Activated T-helper 1 cell treated with anti-CD3 and anti-CD28 coated beads, Interleukin-12 subunit alpha, Interleukin-12 subunit beta, Interleukin-2, Interleukin-4 antibody, amounts not matched to agents 30 ng/mL and 10 ng/mL and 1 ng/mL, durations not matched to agents 14 hours and 24 hours and 36 hours (primary cell): ENCODE measurements at regions of chr6 and their contacts with region 1.

Region 1: DNA sequence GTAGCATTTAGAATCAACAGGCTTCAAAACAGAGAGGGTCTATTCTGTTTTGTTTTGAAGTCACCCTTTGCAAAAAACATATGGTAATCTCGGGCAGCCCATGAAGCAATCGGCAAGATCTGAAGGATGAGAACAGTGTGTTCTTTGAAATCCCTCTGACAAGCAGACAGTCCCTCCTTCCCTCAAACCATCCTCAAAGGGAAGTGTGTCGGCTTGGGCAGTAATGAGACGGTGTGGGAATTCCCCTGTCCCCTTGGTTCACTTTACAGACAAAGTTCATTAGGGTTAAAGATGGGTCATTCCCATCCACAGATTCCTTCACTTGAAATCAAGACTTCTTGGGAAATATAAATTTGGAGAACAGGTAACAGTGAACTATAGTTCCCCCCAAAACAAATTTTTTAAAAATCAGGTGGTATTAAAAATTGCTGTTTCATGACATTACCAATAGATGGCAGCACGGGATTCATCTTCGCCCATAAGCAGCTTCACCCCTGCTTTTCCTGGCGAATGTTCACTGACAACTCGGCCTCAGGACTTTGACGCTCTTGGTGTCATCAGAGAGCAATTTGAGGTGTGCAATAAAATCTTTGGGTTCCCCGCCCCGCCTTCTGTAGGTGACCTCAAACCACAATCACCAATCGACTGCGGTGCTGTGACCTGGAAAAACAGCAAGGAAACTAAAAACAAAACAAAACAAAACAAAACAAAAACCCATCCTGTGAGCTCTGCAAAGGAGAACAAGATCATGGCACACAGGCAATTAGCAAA is 159.3 kb upstream of the TNFAIP3 start:
- DNase-seq: peak; percentile 89
- H3K4me3 Mint-ChIP-seq: peak overlapping the region; percentile 70
- H3K27ac Mint-ChIP-seq: peak overlapping the region; percentile 94
- H3K4me1 Mint-ChIP-seq: peaks cover 76% of the 10 kb centered on the region
- H3K27me3 Mint-ChIP-seq: no peaks in the 10 kb centered on the region

Region 2: DNA sequence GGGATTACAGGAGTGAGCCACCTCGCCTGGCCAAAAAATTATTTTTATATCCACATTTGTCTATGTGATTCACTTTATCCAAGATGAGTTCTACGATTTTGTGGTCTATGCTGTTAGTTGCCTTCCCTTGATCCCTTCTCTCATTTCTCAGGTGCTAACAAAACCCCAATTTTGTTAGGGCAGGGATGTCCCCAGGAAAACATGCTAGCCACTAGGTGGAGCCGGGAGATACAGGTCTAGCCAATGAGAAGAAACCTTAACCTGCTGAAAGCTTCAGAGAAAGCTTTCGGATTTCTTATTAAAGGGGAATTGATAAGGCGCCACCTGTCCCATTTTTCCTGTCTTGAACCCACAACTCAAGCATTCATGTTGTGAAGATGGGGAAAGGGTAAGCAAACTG is 46.2 kb before region 1 on chr6:
- intact Hi-C with region 1: loop called (anchors 1 kb)
- DNase-seq: no peak
- H3K4me3 Mint-ChIP-seq: no peak overlapping the region
- H3K27ac Mint-ChIP-seq: no peak overlapping the region
- H3K4me1 Mint-ChIP-seq: peaks cover 58% of the 10 kb centered on the region
- H3K27me3 Mint-ChIP-seq: peaks cover 2% of the 10 kb centered on the region

Region 3: DNA sequence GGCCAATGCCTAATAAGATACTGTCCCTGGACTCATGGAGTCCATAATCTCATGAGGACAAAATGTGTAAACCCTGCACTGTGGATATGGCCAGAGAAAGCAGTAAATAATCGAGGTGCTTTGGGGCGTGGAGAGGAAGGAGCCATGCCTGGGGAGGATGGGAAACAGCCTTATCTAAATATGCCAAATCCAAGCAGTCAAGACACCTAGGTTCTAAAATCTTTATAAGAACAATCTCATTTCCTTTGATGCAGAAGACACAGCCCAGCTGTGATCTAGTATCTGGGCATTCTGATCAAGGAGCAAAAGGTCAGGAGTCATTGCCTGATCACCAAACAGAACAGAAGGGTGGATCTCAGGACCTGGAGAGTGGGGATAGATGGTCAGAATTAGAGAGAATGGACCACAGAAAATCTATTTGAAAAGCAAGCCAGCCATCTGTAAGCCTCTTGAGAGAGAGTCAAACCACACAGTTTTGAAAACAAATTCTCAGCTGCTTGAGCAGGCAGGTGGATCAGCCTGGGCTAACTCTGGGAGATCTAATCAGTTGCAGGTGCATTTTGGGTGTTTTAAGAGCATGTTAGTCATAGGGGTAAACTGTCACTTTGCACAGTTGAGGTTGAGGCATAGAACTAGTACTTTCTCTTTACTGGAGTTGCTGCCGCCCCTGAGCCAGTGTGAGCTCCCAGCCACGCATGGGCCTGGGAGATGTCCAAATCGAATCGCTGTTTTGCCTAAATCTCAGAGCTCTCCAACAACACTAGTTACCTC is 28.5 kb after region 1 on chr6:
- intact Hi-C with region 1: loop called (anchors 1 kb)
- DNase-seq: peak; percentile 29
- H3K4me3 Mint-ChIP-seq: peak overlapping the region; percentile 0
- H3K27ac Mint-ChIP-seq: peak overlapping the region; percentile 20
- H3K4me1 Mint-ChIP-seq: peaks cover 32% of the 10 kb centered on the region
- H3K27me3 Mint-ChIP-seq: peaks cover 9% of the 10 kb centered on the region

Region 4: GRCh38 chr6:137811121-137811915 is 103.5 kb after region 1 on chr6:
- intact Hi-C with region 1: loop called (anchors 1 kb)
- DNase-seq: peak; percentile 78
- H3K4me3 Mint-ChIP-seq: peak overlapping the region; percentile 43
- H3K27ac Mint-ChIP-seq: peak overlapping the region; percentile 81
- H3K4me1 Mint-ChIP-seq: peaks cover 68% of the 10 kb centered on the region
- H3K27me3 Mint-ChIP-seq: no peaks in the 10 kb centered on the region

Region 5: DNA sequence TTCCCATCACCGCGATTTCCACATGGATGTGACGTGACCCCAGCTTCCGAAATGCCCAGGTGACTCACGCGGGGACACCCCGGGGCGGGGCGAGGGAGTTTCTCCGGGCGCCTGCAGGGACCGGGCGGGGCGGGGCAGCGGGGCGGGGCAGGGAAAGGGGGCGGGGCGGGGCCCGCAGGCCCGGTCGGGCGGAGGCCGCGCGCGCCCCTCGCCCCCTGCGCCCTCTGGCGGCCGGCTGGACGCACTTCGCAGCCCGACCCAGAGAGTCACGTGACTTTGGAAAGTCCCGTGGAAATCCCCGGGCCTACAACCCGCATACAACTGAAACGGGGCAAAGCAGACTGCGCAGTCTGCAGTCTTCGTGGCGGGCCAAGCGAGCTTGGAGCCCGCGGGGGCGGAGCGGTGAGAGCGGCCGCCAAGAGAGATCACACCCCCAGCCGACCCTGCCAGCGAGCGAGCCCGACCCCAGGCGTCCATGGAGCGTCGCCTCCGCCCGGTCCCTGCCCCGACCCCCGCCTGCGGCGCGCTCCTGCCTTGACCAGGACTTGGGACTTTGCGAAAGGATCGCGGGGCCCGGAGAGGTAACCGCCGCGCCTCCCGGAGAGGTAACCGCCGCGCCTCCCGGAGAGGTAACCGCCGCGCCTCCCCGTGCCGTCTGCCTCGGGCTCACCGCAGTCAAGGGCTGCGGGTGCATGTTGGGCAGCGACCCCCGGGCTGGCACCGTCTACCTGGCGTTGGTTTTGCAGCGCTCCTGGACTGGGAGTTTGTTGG is 159.3 kb after region 1 on chr6 and contains the start of gene TNFAIP3:
- intact Hi-C with region 1: loop called (anchors 1 kb)
- DNase-seq: peak; percentile 96
- H3K4me3 Mint-ChIP-seq: peak within 1 kb of the TSS; percentile 98
- H3K27ac Mint-ChIP-seq: peak within 1 kb of the TSS; percentile 99
- H3K4me1 Mint-ChIP-seq: peaks cover 46% of the 10 kb centered on the region
- H3K27me3 Mint-ChIP-seq: no peaks in the 10 kb centered on the region
- total RNA-seq, gene TNFAIP3: 250 and 257 TPM in 2 replicates

Region 6: DNA sequence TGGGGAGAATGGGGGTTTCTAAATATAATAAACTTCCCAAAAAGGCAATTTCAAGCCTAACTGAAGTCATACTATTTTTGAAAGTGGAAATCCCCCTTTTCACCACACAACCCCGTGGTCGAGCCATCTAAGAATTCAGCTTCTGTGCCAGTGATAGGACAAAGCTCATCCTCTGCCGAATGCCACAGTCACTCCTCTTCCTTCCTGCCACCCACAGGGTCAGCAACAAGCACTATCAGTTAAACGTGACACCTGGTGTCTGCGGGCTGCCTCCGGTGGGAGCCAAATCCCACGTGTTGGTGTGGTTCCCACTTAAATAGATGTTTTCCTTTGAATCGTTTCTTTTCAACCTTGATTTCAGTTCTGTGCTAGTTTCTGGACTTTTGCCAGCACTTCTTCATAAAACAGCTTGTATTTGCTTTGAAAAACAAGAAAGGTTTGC is 220.0 kb after region 1 on chr6:
- intact Hi-C with region 1: loop called (anchors 1 kb)
- DNase-seq: peak; percentile 80
- H3K4me3 Mint-ChIP-seq: peak overlapping the region; percentile 52
- H3K27ac Mint-ChIP-seq: peak overlapping the region; percentile 93
- H3K4me1 Mint-ChIP-seq: peaks cover 82% of the 10 kb centered on the region
- H3K27me3 Mint-ChIP-seq: no peaks in the 10 kb centered on the region

Region 7: DNA sequence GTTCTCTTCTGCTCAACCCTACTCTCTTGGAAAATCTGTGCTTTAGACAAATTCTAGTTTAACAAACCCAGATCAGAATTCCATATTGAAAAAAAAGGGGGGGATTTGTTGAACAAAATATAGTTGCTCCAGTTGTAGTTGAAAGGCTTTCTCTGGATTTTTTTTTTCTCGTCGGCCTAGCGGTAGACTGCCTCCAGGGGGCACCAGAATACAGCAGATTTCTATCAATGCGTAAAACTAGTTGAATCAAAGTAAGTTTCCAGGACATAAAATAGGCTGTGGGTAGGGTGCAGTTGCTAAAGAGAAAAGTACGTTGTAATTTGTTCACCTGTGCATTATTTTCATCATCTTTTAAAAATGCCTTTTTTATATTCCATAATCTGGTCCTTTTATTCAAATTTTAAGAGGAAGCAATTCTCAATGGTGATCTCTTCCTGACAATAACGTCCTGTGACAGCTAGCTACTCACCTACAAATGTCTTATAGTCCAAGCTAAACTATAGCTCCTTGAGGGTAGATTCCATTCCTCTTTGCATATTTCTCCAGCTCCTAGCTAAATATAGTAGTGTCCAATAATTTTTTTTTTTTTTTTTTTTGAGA is 294.1 kb after region 1 on chr6:
- intact Hi-C with region 1: loop called (anchors 1 kb)
- DNase-seq: peak; percentile 38
- H3K4me3 Mint-ChIP-seq: no peak overlapping the region
- H3K27ac Mint-ChIP-seq: no peak overlapping the region
- H3K4me1 Mint-ChIP-seq: peaks cover 27% of the 10 kb centered on the region
- H3K27me3 Mint-ChIP-seq: peaks cover 6% of the 10 kb centered on the region

Region 8: DNA sequence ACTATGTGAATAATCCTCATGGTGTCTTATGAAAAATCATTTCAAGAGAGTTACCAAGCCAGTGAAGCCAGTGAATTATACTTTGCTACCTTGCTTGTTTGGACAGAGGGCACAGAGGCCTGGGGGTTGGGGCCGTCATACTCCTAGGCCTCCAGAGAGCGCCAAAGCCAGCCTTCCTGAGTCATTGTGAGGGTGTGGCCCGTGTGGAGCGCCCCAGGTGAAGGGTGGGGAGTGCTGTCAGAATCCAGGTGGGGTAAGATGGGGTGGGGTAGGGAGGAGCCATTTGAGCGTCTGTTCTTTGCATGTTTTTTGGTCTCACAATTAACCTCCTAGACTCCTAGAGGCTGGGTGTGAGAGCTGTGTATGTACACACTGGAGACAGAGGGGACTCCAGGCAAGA is 328.3 kb after region 1 on chr6:
- intact Hi-C with region 1: no loop called
- DNase-seq: no peak
- H3K4me3 Mint-ChIP-seq: no peak overlapping the region
- H3K27ac Mint-ChIP-seq: no peak overlapping the region
- H3K4me1 Mint-ChIP-seq: no peaks in the 10 kb centered on the region
- H3K27me3 Mint-ChIP-seq: peaks cover 9% of the 10 kb centered on the region